ENCODE measurements at regions of chr4 and their contacts with region 1.

Region 1: DNA sequence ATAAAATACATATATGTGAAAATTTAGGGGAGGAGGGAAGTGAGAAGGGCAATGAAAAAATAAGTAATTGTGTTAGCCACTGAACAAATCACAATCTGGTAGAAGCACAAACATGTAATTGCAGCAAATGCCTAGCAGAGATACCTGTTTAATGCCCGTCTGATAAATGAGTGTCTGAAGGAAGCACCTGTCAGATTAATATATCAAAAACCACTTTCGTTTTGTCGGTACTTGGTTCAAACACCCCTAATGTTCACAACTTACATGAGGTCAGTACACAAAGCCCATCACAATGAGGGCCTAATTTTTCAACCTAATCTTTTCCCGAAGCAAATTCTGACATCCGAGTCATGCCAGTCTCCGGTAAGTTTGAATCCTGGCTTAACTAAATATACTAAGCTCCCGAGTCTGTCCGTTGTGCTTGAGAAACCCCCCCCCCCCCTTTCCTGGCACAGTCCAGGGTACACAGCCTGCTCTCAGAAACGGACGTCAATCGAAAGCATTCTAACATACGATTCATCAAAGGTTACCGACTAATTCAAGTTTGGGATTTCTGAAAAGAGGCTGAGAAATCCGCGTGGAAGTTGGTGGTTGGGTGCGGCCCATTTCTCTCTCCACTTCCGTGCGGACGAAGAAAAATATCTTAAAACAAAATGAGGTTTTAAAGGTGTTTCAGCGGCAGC is 758 bp downstream of the SDAD1 start:
- DNase-seq: no peak
- H3K4me3 ChIP-seq: peak overlapping the region; percentile 67 to 80
- H3K27ac ChIP-seq: peak overlapping the region; percentile 65 to 68
- H3K4me1 ChIP-seq: peaks cover 0 to 5% of the 10 kb centered on the region in 2 donors
- H3K27me3 ChIP-seq: no peaks in the 10 kb centered on the region
- CTCF ChIP-seq: no peak

Region 2: DNA sequence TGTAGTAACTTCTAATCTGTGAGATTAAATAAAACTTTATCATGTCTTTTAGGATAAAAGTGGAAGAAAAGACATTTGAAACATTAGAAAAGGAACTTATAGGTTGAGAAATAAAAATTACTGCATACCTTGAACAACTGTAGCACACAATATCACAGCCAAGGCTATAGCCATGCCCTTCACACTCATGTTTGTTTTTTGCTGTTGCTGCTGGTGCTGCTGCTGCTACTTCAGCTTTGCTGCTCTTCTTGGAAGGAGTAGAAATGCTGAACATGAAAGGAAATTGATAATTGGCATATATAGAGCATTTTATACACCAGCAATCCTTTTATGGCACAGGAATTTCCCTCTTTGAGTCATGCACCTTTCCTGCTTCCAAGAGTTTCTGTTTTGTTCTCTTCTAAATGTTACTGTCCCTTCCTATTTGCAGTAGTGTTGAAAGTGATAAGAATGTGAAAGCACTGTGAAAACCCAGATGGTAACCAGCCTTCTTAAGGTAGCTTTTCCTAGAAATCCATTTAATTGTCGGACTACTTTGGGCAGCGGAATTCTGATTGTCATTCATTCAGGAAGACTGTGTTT is 45.9 kb after region 1 on chr4 and contains the start of gene CXCL11:
- intact Hi-C with region 1: no loop called
- DNase-seq: no peak
- H3K4me3 ChIP-seq: no peak within 1 kb of the TSS
- H3K27ac ChIP-seq: no peak within 1 kb of the TSS
- H3K4me1 ChIP-seq: no peaks in the 10 kb centered on the region
- H3K27me3 ChIP-seq: no peaks in the 10 kb centered on the region
- CTCF ChIP-seq: no peak
- total RNA-seq, gene CXCL11: not detected

Region 3: DNA sequence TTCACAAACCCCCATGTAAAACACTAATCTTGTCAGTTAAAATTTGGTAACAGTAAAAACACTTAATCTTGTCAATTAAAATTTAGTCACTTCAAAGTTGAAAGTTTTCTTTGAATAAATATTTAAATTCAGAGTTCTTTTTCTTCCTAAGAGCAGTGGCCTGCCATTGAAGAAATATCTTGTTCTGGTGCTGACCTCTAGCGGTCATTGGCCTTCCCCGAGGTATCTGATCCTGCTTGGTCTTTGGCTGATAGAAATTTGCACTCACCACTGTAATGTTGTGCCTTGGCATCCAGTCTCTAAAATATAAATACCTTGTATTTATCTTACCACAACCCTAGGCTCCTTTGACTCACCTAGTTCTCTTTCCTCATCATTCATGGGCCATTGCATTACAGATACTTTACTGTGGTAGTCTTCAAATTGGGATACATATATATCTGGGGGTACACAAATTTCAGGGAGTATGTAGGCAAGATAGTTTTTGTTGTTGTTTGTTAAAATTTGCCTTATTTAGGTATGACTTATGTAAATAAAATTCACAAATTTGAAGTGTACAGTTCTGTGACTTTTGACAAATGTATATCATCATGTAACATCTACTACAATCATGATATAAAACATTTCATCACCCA is 77.8 kb after region 1 on chr4:
- intact Hi-C with region 1: loop called (anchors 2 kb)
- DNase-seq: peak in 1 of 2 donors; percentile 77
- H3K4me3 ChIP-seq: no peak overlapping the region
- H3K27ac ChIP-seq: no peak overlapping the region
- H3K4me1 ChIP-seq: no peaks in the 10 kb centered on the region
- H3K27me3 ChIP-seq: no peaks in the 10 kb centered on the region
- CTCF ChIP-seq: peak; percentile 9 to 76 (median 73)

Region 4: GRCh38 chr4:76148142-76148865 is 158.3 kb after region 1 on chr4 and contains the start of gene NUP54:
- intact Hi-C with region 1: loop called (anchors 2 kb)
- DNase-seq: peak; percentile 81 to 98
- H3K4me3 ChIP-seq: peak within 1 kb of the TSS; percentile 85 to 95
- H3K27ac ChIP-seq: peak within 1 kb of the TSS; percentile 87 to 88
- H3K4me1 ChIP-seq: peaks cover 0 to 24% of the 10 kb centered on the region in 2 donors
- H3K27me3 ChIP-seq: no peaks in the 10 kb centered on the region
- CTCF ChIP-seq: no peak
- total RNA-seq, gene NUP54: 20.2 TPM

Measured in ascending aorta (tissue), 2 donors.